Motor neuron (in vitro differentiated cells): ENCODE measurements at regions of chr10 and their contacts with region 1.

Region 1: DNA sequence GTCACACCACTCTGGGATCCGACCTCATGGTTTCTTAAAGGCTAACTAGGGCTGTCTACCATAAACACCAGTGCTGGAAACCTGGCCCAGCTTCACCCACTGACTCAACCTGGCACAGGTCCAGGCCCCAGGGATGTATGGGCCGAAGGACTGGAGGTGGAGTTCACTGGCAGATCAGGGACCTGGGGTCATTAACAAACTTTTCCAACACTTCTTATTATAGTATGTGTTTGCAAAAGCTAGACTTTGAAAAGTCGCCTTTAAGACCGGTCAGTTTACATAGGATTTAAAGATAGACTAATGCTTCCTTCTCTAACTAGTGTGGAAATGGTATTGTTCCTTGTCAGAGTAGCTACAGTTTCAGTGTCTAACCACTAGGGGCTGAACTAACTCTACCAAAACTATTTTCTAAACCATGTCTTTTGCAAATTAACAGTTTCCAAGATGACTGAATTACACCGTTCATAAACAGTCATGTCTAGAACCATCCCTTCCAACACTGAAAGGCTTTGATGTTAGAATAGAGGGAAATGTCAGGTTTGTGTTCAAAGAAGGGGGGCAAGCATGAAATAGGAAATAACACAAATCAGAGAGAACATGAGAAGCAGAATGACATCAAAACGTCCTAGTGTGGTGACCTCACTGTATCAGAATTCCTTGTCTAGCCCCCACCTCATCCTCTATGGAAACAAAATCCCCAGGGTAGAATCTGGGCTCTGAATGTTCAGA is 29.7 kb downstream of the STN1 start:
- ATAC-seq: peak; percentile 38 to 82 (median 64)
- H3K4me3 ChIP-seq: no peak overlapping the region
- H3K27ac ChIP-seq: no peak overlapping the region
- H3K4me1 ChIP-seq: peaks cover 4% of the 10 kb centered on the region in 2 donors

Region 2: GRCh38 chr10:103564776-103565520 is 323.3 kb before region 1 on chr10:
- in situ Hi-C with region 1: no loop called
- ATAC-seq: peak in 7 of 8 experiments; percentile 13 to 76 (median 34)
- H3K4me3 ChIP-seq: no peak overlapping the region
- H3K27ac ChIP-seq: no peak overlapping the region
- H3K4me1 ChIP-seq: no peaks in the 10 kb centered on the region

Region 3: DNA sequence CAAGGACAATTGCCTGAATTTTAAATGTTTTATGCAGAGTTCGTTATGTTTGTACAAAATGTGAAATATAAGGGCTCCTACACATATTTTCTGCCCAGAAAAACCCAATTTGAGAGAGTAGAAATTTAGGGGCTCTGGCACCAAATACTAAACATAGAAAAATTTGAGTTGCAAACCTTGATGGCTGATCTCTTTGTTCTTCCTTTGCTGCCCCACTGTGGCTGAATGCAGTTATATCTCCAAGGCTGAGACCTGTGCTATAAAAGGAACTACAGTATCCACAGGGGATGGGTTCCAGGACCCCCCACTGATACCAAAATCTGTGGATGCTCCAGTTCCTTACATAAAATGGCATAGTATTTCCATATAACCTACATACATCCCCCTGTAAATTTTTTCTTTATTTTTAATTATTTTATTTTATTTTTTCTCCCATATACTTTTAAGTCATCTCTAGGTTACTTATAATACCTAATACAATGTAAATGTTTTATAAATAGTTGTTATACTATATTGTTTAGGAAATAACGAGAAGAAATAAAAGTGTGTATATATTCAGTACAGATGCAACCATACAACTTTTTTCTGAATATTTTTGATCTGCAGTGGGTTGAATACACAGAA is 321.4 kb after region 1 on chr10:
- in situ Hi-C with region 1: loop called in 4 of 9 experiments (anchors 10 to 25 kb)
- ATAC-seq: peak in 5 of 8 experiments; percentile 50 to 72 (median 62)
- H3K4me3 ChIP-seq: no peak overlapping the region
- H3K27ac ChIP-seq: no peak overlapping the region
- H3K4me1 ChIP-seq: no peaks in the 10 kb centered on the region